ENCODE measurements at regions of chr3 and their contacts with region 1.

Region 1: GRCh38 chr3:195738274-195739044 is 17.7 kb downstream of the MUC20 start:
- DNase-seq: no peak
- ATAC-seq: no peak
- H3K4me3 ChIP-seq: no peak overlapping the region
- H3K27ac ChIP-seq: no peak overlapping the region
- H3K4me1 ChIP-seq: peaks cover 1% of the 10 kb centered on the region; the same call in 1 of the 2 replicates
- H3K27me3 ChIP-seq: peaks cover 6% of the 10 kb centered on the region; the same call in 1 of the 2 replicates
- CTCF ChIP-seq: no peak

Region 2: GRCh38 chr3:195803289-195803950 is 65.0 kb after region 1 on chr3:
- CTCF ChIA-PET with region 1: no interaction called
- POLR2A ChIA-PET with region 1: interaction called, 13 read pairs
- in situ Hi-C with region 1: no loop called
- intact Hi-C with region 1: no loop called
- DNase-seq: no peak
- ATAC-seq: no peak
- H3K4me3 ChIP-seq: no peak overlapping the region
- H3K27ac ChIP-seq: no peak overlapping the region
- H3K4me1 ChIP-seq: no peaks in the 10 kb centered on the region
- H3K27me3 ChIP-seq: peaks cover 2% of the 10 kb centered on the region; the same call in 1 of the 2 replicates
- CTCF ChIP-seq: no peak

Region 3: GRCh38 chr3:195813916-195814640 is 75.6 kb after region 1 on chr3:
- CTCF ChIA-PET with region 1: no interaction called
- POLR2A ChIA-PET with region 1: no interaction called
- in situ Hi-C with region 1: no loop called
- intact Hi-C with region 1: no loop called
- DNase-seq: no peak
- ATAC-seq: no peak
- H3K4me3 ChIP-seq: no peak overlapping the region
- H3K27ac ChIP-seq: no peak overlapping the region
- H3K4me1 ChIP-seq: no peaks in the 10 kb centered on the region; the same call in 1 of the 2 replicates
- H3K27me3 ChIP-seq: no peaks in the 10 kb centered on the region
- CTCF ChIP-seq: no peak